ENCODE measurements at regions of chr17 and their contacts with region 1.

Region 1: DNA sequence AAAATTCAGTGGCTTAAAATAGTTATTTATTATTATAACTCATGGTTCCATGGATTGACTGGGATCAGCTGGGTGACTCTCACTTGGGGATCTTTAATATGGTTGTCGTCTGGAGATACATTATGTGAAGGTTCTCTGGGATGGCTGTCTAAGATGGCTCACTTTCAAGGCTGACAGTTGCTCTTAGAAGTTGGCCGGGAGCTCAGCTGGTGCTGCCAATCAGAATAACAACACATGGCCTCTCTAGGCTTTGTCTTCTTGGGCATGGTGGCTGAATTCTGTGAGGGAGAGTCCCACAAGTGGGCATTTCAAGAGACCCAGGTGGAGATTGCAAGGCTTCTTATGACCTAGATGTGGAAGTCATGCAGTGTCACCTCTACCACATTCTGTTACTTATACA is 269.7 kb downstream of the CA10 start:
- DNase-seq: no peak
- H3K4me3 ChIP-seq: no peak overlapping the region
- H3K27ac ChIP-seq: no peak overlapping the region
- H3K4me1 ChIP-seq: no peaks in the 10 kb centered on the region
- H3K27me3 ChIP-seq: peaks cover 4% of the 10 kb centered on the region
- CTCF ChIP-seq: no peak

Region 2: DNA sequence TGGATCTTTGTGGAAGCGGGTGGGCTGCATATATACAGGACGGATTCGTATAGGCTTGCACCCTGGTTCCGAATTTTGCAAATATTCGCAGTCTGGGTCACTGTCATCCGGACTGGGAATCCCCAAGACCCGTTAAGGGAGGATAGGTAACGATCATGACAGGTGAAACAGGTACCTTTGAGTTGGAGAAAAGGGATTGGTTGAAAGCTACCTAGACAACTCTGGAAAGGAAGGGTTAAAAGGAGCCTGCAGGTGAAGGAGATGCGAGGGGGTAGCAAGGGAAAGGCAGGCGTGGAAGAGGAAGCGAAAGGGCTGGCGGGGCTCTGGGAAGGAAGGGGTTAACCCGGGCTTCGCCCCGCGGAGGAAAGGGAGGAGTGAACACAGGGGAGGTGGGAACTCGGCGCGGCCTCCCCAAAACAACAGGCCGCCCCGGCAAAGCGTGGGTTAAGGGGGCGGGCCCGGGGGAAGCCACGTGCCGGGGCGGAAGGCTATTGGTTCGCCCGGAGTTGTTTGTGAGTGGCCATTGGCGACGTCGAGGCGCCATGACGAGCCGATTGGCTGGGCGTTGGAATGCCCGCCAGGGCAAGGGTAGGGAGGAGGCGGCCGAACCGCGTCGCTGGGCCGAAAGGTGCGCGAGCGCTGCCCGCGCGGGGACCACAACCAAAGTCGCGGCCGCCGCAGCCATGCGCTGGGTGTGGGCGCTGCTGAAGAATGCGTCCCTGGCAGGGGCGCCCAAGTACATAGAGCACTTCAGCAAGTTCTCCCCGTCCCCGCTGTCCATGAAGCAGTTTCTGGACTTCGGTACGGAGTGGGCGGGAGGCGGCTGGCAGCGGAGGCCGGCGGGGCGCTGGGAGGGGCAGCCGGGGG is 1793.8 kb before region 1 on chr17 and contains the start of gene PDK2:
- CTCF ChIA-PET with region 1: no interaction called
- POLR2A ChIA-PET with region 1: interaction called, 11 read pairs
- intact Hi-C with region 1: no loop called
- DNase-seq: peak; percentile 99
- H3K4me3 ChIP-seq: peak within 1 kb of the TSS; percentile 77
- H3K27ac ChIP-seq: peak within 1 kb of the TSS; percentile 82
- H3K4me1 ChIP-seq: peaks cover 10% of the 10 kb centered on the region
- H3K27me3 ChIP-seq: no peaks in the 10 kb centered on the region
- CTCF ChIP-seq: no peak
- total RNA-seq, gene PDK2: 20.4 and 31.6 TPM in 2 replicates

Region 3: DNA sequence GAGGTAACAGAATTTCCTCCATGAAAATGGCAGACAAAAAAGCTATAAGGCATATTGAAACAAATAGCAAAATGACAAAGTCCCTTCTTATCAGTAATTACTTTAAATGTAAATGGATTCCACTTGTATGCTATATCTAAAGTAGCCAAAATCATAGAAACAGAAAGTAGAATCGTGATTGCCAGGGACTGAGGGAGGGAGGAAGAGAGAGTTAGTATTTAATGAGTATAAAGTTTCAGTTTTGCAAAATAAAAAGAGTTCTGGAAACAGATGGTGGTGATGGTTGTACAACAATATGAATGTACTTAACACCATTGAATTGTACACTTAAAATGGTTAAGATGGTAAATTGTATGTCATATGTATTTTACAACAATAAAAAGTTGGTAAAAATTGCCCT is 137.7 kb before region 1 on chr17:
- CTCF ChIA-PET with region 1: no interaction called
- POLR2A ChIA-PET with region 1: no interaction called
- intact Hi-C with region 1: no loop called
- DNase-seq: no peak
- H3K4me3 ChIP-seq: no peak overlapping the region
- H3K27ac ChIP-seq: no peak overlapping the region
- H3K4me1 ChIP-seq: no peaks in the 10 kb centered on the region
- H3K27me3 ChIP-seq: no peaks in the 10 kb centered on the region
- CTCF ChIP-seq: no peak